ENCODE measurements at regions of chr10 and their contacts with region 1.

Region 1: GRCh38 chr10:81498152-81498551 is 376.8 kb upstream of the NRG3 start:
- DNase-seq: no peak
- ATAC-seq: no peak
- H3K4me3 ChIP-seq: no peak overlapping the region
- H3K4me3 Mint-ChIP-seq: no peak overlapping the region
- H3K27ac ChIP-seq: no peak overlapping the region
- H3K27ac Mint-ChIP-seq: no peak overlapping the region
- H3K4me1 ChIP-seq: no peaks in the 10 kb centered on the region
- H3K4me1 Mint-ChIP-seq: no peaks in the 10 kb centered on the region
- H3K27me3 ChIP-seq: no peaks in the 10 kb centered on the region
- H3K27me3 Mint-ChIP-seq: no peaks in the 10 kb centered on the region
- CTCF ChIP-seq: no peak

Region 2: DNA sequence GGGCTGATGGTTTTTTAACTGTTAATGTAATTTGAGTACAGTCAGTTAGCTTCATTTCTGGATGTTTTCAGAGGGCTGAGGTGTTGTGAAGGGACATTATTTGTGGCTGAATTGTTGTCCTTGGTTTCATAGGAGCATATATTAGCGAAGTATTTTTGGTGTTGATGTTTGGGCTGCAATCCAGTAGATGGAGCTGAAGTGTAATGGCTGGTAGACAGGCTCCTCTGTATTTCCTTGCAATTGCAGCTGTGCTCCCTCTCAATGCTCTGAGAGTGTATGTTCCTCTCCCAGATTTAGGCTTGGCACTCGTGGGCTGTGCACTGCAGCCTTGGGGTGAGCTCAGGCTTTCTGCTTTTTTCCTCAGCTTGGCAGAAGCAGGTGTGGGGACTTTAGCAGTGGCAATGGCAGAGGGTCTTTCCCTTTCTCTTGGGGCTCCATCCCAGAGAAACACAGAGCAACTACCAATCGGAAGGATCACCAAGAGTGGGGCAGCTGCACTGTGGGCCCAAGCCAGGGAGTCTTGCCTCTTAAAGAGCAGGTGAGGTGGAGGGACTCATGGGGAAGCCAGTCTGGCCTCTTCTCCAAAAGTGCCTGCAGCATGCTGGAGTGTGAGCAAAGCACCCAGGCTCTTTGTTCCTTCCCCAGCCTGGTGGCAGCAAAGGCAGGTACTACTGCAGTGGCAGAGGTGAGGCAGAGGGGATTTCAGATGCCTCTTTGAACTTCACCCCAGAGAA is 416.1 kb before region 1 on chr10:
- CTCF ChIA-PET with region 1: no interaction called
- POLR2A ChIA-PET with region 1: no interaction called
- intact Hi-C with region 1: no loop called
- DNase-seq: no peak
- ATAC-seq: no peak
- H3K4me3 ChIP-seq: no peak overlapping the region
- H3K4me3 Mint-ChIP-seq: no peak overlapping the region
- H3K27ac ChIP-seq: no peak overlapping the region
- H3K27ac Mint-ChIP-seq: no peak overlapping the region
- H3K4me1 ChIP-seq: no peaks in the 10 kb centered on the region
- H3K4me1 Mint-ChIP-seq: no peaks in the 10 kb centered on the region
- H3K27me3 ChIP-seq: no peaks in the 10 kb centered on the region
- H3K27me3 Mint-ChIP-seq: no peaks in the 10 kb centered on the region
- CTCF ChIP-seq: no peak

Region 3: DNA sequence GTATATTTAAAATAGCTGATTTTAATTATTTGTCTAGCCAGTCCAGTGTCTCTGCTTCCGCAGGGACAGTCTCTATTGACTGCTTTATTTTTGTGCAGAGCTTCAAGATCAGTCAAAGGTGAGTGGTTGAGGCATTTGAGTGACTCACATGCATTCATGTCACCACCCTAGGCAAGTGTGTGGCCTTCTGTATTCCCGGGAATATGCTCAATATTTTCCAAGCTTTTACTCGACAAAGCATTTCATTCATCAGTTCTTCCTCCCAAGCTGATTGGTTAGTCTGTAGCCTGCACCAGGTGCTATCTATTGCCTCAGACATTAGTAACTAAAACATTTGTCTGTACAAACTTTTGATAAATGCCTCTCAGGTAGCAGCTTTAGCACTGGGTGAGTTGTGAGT is 94.7 kb before region 1 on chr10:
- CTCF ChIA-PET with region 1: no interaction called
- POLR2A ChIA-PET with region 1: no interaction called
- intact Hi-C with region 1: no loop called
- DNase-seq: no peak
- ATAC-seq: no peak
- H3K4me3 ChIP-seq: no peak overlapping the region
- H3K4me3 Mint-ChIP-seq: no peak overlapping the region
- H3K27ac ChIP-seq: no peak overlapping the region
- H3K27ac Mint-ChIP-seq: no peak overlapping the region
- H3K4me1 ChIP-seq: no peaks in the 10 kb centered on the region
- H3K4me1 Mint-ChIP-seq: no peaks in the 10 kb centered on the region
- H3K27me3 ChIP-seq: no peaks in the 10 kb centered on the region
- H3K27me3 Mint-ChIP-seq: no peaks in the 10 kb centered on the region
- CTCF ChIP-seq: no peak

Region 4: DNA sequence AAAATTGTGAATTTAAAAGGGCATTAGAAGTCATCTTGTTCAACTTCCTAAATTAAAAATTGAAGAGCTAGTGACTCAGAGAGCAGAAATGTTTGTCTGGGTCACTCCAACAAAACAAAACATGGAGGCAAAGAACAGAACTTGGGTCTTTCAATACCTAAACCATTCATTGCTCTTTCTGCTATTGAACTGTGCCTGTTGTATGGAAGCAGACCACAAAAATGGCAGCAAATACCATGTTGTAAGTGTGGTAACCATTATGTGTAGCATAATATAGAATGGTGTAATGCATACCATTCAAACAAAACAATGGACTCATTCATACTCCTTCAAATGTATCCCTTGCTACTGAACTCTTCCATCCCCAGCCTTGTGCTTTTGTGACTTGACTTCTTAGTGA is 16.7 kb after region 1 on chr10:
- CTCF ChIA-PET with region 1: no interaction called
- POLR2A ChIA-PET with region 1: no interaction called
- intact Hi-C with region 1: loop called in 1 of 2 experiments (anchors 2 kb)
- DNase-seq: no peak
- ATAC-seq: no peak
- H3K4me3 ChIP-seq: no peak overlapping the region
- H3K4me3 Mint-ChIP-seq: no peak overlapping the region
- H3K27ac ChIP-seq: no peak overlapping the region
- H3K27ac Mint-ChIP-seq: no peak overlapping the region
- H3K4me1 ChIP-seq: no peaks in the 10 kb centered on the region
- H3K4me1 Mint-ChIP-seq: no peaks in the 10 kb centered on the region
- H3K27me3 ChIP-seq: no peaks in the 10 kb centered on the region
- H3K27me3 Mint-ChIP-seq: no peaks in the 10 kb centered on the region
- CTCF ChIP-seq: no peak

Region 5: GRCh38 chr10:81792729-81793128 is 294.6 kb after region 1 on chr10:
- CTCF ChIA-PET with region 1: no interaction called
- POLR2A ChIA-PET with region 1: no interaction called
- intact Hi-C with region 1: no loop called
- DNase-seq: no peak
- ATAC-seq: no peak
- H3K4me3 ChIP-seq: no peak overlapping the region
- H3K4me3 Mint-ChIP-seq: no peak overlapping the region
- H3K27ac ChIP-seq: no peak overlapping the region
- H3K27ac Mint-ChIP-seq: no peak overlapping the region
- H3K4me1 ChIP-seq: no peaks in the 10 kb centered on the region
- H3K4me1 Mint-ChIP-seq: no peaks in the 10 kb centered on the region
- H3K27me3 ChIP-seq: no peaks in the 10 kb centered on the region
- H3K27me3 Mint-ChIP-seq: no peaks in the 10 kb centered on the region
- CTCF ChIP-seq: no peak